Lower leg skin (tissue), 4 donors: ENCODE measurements at regions of chr7 and their contacts with region 1.

Region 1: GRCh38 chr7:150737265-150738055 is at the start of gene GIMAP5:
- DNase-seq: no peak
- H3K4me3 ChIP-seq: peak within 1 kb of the TSS; percentile 10
- CTCF ChIP-seq: no peak
- POLR2A ChIP-seq: no peak
- total RNA-seq, gene GIMAP5: 4.6 to 18.7 (median 10.9) TPM

Region 2: DNA sequence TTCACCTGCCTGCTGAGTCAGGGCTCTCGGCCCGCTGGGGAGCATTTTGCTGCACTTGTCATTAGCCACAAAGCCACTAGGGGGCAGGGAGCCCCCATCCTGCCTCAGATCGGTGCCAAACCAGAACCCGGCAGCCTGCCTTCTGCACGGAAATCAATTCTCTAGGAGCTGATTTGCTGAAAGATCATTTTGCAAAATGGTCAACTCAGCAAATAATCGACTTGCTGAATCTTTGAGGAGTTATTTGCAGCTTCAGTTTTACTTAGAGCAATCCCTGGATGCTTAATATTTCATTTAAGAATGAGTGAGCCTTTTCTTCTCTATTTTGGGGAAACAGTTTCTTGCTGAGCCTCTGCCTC is 288.7 kb before region 1 on chr7:
- intact Hi-C with region 1: loop called (anchors 10 kb)
- DNase-seq: peak; percentile 71 to 96
- H3K4me3 ChIP-seq: no peak overlapping the region
- CTCF ChIP-seq: peak in 1 of 3 donors; percentile 10
- POLR2A ChIP-seq: no peak